Activated CD4-positive, alpha-beta memory T cell treated with anti-CD3 and anti-CD28 coated beads, Interleukin-2, amount 10 ng/mL, durations not matched to agents 7 days and 5 days (primary cell): ENCODE measurements at regions of chr17 and their contacts with region 1.

Region 1: DNA sequence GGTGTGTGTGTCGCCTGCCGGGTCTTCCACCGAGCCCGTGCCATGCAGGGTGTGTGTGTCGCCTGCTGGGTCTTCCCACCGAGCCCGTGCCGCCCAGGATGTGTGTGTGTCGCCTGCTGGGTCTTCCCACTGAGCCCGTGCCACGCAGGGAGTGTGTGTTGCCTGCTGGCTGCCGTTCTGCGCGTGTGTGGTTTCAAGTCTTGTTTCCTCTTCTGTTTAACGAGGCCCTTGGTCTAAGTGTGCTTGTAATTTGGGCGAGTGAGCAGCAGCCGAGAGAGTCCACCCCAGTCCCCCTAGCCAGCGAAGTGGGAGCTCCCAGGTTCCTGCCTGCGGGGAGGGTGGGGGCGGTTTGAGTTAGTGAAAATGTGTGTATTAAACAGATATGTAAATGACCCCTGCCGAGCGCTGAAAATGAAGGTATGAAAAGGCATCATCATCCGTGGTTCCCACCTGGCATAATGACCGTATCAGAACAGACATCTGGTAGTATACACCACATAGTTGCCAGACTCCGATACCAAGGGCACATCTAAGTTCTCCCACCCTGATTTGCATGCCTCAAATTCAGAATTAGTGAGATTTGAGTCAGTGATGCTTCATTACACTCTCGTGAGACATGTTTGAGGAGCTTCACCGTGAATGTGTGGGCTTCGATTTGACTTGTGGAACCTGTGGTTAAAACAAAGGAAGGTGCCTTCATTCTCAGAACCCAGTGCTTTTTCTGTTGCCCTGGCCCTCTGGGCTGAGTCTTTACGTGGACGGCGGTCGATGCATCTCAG is 114.5 kb upstream of the CHMP6 start:
- DNase-seq: peak; percentile 77
- H3K4me3 Mint-ChIP-seq: peak overlapping the region; percentile 72
- H3K27ac Mint-ChIP-seq: peak overlapping the region; percentile 100
- H3K4me1 Mint-ChIP-seq: peaks cover 68% of the 10 kb centered on the region
- H3K27me3 Mint-ChIP-seq: no peaks in the 10 kb centered on the region

Region 2: DNA sequence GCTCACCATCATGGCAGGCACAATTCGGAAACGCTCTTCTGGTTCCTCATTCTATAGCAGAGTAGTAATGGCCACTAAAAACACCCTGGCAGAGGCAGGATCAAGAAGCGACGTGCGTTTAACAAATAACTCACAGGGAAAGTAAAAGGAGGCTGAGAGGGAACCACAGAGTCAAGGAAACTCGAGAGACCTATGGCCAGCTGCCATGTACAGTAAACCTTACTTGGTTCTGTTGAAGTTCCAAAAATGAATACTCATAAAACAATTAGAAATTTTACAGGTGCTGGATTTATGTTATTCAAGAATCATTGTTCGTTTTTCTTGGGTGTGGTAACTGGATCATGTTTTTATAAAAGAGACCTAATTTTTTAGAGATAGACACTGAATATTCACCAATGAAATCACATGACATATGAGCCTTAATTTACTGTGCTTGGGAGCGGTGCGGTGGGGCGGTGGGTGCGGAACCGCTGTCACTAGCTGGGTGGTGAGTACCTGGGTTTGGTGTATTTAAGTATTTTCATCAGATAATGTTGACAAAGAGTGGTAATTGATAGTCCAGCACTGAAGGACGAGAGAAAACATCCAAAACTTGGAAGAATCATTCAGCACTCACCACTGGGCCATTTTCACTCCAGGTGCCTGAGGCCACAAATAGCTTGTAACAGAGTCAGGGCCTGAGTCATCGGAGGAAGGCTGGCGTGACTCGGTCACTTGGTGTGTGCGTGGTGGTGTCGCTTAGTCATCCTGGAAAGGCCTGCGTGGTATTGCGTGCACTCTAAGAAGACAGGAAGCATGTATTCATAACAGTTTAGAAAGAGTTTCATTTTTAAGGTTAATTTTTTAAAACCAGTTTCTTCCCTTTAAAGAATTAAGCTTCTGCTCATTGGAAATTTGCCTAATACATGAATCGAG is 20.9 kb before region 1 on chr17:
- CTCF ChIA-PET with region 1: interaction called, 7 read pairs
- POLR2A ChIA-PET with region 1: interaction called, 29 read pairs
- DNase-seq: peak; percentile 94
- H3K4me3 Mint-ChIP-seq: peak overlapping the region; percentile 26
- H3K27ac Mint-ChIP-seq: peak overlapping the region; percentile 98
- H3K4me1 Mint-ChIP-seq: peaks cover 91% of the 10 kb centered on the region
- H3K27me3 Mint-ChIP-seq: no peaks in the 10 kb centered on the region